GM10248 (cell line): ENCODE measurements at regions of chrX and their contacts with region 1.

Region 1: DNA sequence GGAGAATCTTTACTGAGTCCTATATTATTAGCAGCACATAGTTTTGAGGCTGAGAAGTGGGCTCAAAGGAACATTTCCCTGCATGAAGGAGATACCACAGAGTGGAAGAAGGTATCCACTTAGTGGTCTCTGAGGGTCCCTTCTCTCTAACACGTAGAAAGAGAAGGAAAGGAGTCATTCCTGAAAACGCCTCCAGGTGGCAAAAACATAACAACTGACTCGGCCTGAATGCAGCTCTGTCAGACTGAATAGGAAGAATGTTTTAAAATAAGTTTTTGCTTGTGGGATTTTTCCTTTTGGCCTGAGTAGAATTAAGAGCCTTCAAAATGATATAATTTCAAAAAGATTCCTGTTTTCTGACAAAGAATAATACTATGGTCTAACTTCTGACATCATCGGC is 23.3 kb downstream of the RPGR start:
- DNase-seq: no peak
- CTCF ChIP-seq: no peak

Region 2: GRCh38 chrX:38151441-38151840 is 152.6 kb before region 1 on chrX:
- CTCF ChIA-PET with region 1: no interaction called
- POLR2A ChIA-PET with region 1: no interaction called
- DNase-seq: no peak
- CTCF ChIP-seq: no peak

Region 3: DNA sequence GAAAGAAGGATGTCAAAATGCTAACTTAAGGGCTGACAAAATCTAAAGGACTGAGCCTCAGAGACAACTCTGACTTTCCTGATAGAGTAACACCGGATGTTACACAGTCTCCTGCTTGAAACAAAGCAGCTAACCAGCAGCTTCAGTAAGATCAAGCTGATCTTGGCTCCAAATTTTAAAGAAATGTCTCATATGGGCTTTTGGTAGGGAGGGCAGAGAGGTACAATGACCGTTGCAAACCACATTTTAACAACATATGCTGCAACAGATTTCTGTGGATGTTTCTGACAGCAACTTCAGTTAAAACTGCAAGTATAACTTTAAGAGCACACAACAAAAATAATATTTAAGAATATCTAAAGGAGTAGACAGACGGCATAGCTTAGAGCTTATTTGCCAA is 14.2 kb after region 1 on chrX:
- CTCF ChIA-PET with region 1: interaction called, 11 read pairs
- POLR2A ChIA-PET with region 1: no interaction called
- DNase-seq: no peak
- CTCF ChIP-seq: no peak